Activated CD4-positive, alpha-beta memory T cell treated with anti-CD3 and anti-CD28 coated beads, Interleukin-2, amount 10 ng/mL, durations not matched to agents 7 days and 5 days (primary cell): ENCODE measurements at regions of chr2 and their contacts with region 1.

Region 1: DNA sequence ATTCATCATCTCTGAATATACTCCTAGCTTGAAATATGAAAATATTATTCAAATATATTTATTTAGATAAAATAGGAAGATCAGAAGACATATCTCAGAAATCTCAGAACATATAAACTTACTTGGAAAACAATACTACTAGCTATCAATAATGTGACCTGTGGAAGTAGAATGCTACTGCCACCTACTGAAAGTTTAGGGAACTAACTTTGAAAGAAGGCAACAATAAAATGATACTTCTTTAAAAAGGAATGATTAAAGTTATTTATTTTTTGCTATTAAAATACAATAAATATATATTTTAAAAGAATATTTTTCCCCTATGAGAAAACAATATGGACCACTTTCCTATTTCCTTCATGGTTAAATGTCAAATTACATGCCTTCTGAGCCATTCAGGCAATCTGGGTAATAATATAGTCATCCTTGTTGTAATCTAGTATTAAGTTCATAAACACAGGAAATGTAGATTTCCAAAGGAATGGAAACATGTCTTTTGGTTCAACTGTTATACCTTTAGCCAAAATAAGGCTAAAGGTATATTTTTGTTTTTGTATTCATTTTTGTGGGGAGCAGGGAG is 26.0 kb downstream of the ACADL start:
- DNase-seq: no peak
- H3K4me3 Mint-ChIP-seq: no peak overlapping the region
- H3K27ac Mint-ChIP-seq: no peak overlapping the region
- H3K4me1 Mint-ChIP-seq: no peaks in the 10 kb centered on the region
- H3K27me3 Mint-ChIP-seq: peaks cover 18% of the 10 kb centered on the region

Region 2: DNA sequence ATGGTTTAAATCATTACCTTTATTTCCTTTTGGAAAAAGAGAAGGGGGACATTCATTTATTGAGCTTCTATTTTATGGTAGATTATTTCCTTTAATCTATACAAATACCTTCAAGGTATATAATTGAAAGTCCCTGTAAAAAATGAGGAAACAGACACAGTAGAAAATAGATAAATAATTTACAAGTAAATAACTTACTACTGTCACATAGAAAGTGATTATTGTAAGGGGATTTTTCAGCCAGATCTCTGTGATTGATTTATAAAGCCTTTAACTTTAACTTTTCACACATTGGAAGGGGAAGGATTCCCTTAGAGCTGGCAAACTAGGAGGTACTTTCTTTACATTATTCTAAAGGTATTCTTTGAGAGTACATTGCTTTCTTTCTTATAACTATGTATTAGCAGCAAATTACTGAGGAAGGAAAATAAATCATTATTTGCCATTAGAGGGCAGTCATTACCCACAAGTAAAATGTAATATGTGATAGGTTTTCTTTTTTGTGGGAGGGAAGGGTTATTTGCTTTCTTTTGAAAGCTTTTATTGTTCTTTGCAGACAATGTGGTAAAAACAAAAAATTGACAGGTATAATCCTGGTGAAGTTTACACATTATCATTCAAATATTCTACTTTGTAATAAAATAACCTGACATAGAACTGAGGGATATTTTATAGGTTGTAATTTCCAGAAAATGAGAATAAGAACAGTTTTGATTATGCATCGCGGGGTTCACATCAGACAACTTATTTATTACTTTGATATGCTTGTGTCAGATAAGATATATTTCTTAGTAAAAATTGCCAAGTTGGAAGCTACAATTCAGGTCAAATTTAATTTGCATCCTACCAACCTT is 221.7 kb before region 1 on chr2:
- CTCF ChIA-PET with region 1: interaction called, 13 read pairs
- POLR2A ChIA-PET with region 1: no interaction called
- DNase-seq: no peak
- H3K4me3 Mint-ChIP-seq: no peak overlapping the region
- H3K27ac Mint-ChIP-seq: no peak overlapping the region
- H3K4me1 Mint-ChIP-seq: no peaks in the 10 kb centered on the region
- H3K27me3 Mint-ChIP-seq: peaks cover 12% of the 10 kb centered on the region

Region 3: DNA sequence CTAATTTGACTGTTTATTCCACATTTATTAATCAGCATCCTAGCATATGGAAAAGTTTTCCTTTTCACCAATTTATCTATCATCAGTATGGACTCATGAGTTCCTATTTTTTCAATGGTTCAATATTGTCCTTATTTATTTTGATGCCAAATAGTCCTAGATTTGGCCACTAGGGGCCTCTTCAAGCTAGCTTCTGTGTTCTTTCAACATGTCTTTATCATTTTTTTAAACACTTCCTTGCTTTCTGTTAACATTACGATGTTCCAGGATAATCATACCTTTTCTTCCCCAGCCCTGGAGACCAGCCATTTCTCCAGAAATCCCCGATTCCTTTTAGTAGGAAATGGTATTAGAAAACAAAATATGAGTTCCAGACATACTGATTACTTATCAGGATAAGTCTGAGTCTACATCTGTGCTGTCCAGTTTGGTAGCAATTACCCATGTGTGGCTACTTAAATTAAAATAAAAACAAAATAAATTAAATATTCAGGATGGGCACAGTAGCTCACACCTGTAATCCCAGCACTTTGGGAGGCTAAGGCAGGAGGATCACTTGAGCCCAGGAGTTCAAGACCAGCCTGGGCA is 126.3 kb before region 1 on chr2:
- CTCF ChIA-PET with region 1: interaction called, 14 read pairs
- POLR2A ChIA-PET with region 1: no interaction called
- DNase-seq: no peak
- H3K4me3 Mint-ChIP-seq: no peak overlapping the region
- H3K27ac Mint-ChIP-seq: no peak overlapping the region
- H3K4me1 Mint-ChIP-seq: no peaks in the 10 kb centered on the region
- H3K27me3 Mint-ChIP-seq: no peaks in the 10 kb centered on the region